ENCODE measurements at regions of chr16 and their contacts with region 1.

Region 1: DNA sequence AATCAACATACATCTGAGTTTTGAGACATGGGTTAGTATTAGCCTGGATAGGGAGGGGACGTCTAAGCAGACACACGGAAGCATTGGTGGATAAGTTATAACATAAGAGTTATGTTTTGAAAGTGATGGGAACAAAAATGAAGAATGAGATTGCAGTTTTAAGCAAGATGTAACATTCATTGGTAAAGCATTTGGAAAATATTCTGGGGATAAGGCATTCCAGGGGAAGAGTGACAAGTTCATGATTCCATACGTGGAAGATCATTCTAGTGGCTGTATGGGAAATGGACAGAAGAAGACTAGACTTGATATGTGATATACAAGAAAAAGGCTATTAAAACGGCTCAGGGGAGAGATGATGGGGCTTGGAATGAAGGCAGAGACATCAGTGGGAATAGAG is 632.9 kb downstream of the CDH8 start:
- DNase-seq: no peak
- ATAC-seq: no peak
- H3K4me3 ChIP-seq: no peak overlapping the region
- H3K27ac ChIP-seq: no peak overlapping the region
- H3K4me1 ChIP-seq: no peaks in the 10 kb centered on the region
- H3K27me3 ChIP-seq: no peaks in the 10 kb centered on the region
- CTCF ChIP-seq: no peak
- POLR2A ChIP-seq: no peak

Region 2: GRCh38 chr16:61344791-61345190 is 58.6 kb before region 1 on chr16:
- intact Hi-C with region 1: loop called in 1 of 10 experiments (anchors 10 kb)
- DNase-seq: no peak
- ATAC-seq: no peak
- H3K4me3 ChIP-seq: no peak overlapping the region
- H3K27ac ChIP-seq: no peak overlapping the region
- H3K4me1 ChIP-seq: no peaks in the 10 kb centered on the region
- H3K27me3 ChIP-seq: no peaks in the 10 kb centered on the region
- CTCF ChIP-seq: no peak
- POLR2A ChIP-seq: no peak

Measured in heart left ventricle (tissue), 16 donors.